ENCODE measurements at regions of chr11 and their contacts with region 1.

Region 1: DNA sequence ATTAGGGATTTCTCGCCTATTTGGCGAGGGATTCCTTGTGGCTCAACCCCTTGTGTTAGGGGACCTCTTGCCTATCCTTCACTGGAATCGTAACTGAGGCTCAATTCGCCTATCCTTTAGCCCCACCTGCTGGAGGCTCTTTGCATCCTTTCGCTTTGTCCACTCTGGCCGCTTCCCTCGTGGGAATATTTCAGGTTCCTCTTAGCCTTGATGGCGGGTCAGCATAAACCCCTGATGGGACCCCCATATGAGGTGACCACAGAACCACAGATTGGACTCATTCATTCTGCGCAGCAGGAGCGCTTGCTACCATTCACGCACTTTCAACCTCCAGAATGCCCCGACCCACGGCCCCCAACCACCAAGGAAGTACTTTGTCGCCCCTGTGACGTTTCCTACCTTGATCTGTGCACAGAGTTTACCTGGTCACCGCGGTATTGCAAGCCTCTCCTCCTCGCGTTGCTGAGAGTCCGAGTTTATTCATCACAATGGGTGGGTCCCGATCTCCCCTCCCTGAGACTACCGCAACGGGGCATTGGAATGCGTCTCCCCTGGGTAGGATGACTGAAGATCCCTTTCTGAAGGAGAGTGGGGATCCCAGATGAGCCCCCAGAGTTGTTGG is at the start of gene OR52N2:
- DNase-seq: peak; percentile 76
- ATAC-seq: peak; percentile 92
- total RNA-seq, gene OR52N2: not detected

Region 2: DNA sequence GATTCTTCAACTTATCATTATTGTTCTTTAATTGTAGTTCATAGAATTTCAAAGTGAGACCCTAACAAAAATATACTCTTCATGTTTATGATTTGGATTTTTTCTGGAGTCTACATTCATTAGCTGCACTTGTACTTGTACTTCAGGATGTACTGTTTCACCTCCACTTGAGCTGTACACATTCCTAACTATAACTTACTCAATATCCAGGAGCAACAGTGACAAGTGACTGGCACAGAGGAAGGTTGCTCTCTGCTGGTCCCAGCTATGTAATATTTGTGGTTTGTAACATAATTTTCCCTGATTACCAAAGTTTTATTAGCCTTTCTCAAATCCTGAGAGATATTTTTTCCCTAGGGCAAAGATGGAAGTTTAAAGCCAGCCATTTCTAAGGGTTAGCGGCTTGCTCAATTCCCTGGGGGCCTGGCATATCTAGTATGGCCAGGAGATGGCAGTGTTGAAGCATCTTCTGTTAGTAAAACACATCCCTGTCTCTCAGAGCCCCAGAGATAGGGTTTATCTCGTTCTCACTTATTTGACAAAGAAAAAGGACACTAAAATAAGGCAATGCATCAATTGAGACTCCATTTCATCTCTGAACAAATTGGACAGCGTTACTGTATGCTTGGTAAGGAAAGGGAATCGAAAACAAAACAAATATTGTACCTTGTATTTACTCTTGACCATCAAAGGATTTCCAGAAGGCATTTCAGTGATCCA is 684.6 kb before region 1 on chr11:
- intact Hi-C with region 1: loop called (anchors 5 kb)
- DNase-seq: peak; percentile 50
- ATAC-seq: peak; percentile 64

Region 3: GRCh38 chr11:5476184-5476819 is 332.3 kb before region 1 on chr11:
- intact Hi-C with region 1: loop called (anchors 2 kb)
- DNase-seq: no peak
- ATAC-seq: no peak

Region 4: GRCh38 chr11:5596607-5597201 is 211.9 kb before region 1 on chr11 and contains the start of gene TRIM6:
- intact Hi-C with region 1: loop called (anchors 10 kb)
- DNase-seq: peak; percentile 76
- ATAC-seq: peak; percentile 69
- total RNA-seq, gene TRIM6: 0.84 TPM

Region 5: GRCh38 chr11:5684646-5685362 is 123.8 kb before region 1 on chr11 and contains the start of gene TRIM5:
- intact Hi-C with region 1: loop called (anchors 2 kb)
- DNase-seq: peak; percentile 91
- ATAC-seq: peak; percentile 98
- total RNA-seq, gene TRIM5: 9.8 TPM

Measured in Right ventricle myocardium inferior (tissue), 1 donor.